ENCODE measurements at regions of chr12 and their contacts with region 1.

Region 1: DNA sequence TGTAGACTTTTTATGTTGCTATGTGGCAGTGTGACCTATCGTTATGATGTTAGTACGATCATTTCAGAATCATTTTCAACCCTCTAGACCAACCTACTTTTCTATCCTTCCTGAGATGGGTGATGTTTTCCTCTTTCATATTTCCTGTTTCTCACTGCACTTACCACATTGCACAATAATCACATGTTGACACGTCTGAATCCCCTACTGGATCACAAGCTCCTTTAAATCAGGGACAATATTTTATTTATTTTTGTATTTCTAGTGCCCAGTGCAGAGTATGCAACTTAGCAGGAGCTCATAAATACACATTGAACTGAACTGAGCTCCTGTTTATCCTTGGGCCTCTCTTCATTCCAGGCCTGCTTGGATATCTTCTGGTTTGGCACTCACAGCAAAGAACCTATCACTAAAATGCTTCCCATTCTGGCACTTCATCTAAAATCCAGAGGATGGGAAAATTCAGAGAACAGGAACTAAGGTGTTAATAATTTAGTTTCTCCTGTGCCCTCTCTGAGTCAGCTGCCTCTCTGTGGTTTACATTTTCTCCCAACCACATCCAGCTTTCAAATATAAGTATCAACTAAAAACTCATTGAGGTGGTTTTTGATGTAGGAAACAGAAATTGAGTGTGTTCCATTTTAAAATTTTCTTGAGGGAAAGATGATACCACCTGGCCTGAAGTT is 69.4 kb upstream of the DYRK2 start:
- DNase-seq: peak in 6 of 10 donors; percentile 27 to 78 (median 64)
- ATAC-seq: peak; percentile 92 to 93
- H3K4me3 Mint-ChIP-seq: peak overlapping the region; percentile 54 to 85 (median 75)
- H3K27ac Mint-ChIP-seq: peak overlapping the region in 8 of 10 donors; percentile 13 to 76 (median 54)
- H3K4me1 Mint-ChIP-seq: peaks cover 33 to 63% (median 52%) of the 10 kb centered on the region in 4 donors
- H3K27me3 Mint-ChIP-seq: no peaks in the 10 kb centered on the region

Region 2: DNA sequence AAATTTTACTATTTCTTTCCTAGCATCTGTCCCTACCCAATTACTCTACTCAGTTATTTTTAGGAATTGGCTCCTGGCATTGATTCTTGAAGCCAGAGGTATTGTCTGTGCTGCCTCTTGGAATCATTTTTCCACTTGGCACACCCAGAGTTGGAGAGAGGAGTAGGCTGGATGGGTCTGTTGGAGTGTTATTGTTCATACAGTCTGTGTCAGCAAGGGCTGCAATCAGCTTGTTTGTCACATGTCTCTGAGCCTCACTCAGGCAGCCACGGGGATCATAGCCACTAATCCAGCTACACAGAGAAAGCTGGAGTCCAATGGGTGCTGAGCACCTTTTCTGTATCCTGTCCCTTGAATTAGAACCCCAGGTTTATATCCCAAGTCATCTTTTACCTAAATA is 106.6 kb before region 1 on chr12:
- POLR2A ChIA-PET with region 1: no interaction called
- DNase-seq: no peak
- ATAC-seq: no peak
- H3K4me3 Mint-ChIP-seq: no peak overlapping the region
- H3K27ac Mint-ChIP-seq: no peak overlapping the region
- H3K4me1 Mint-ChIP-seq: peaks cover 13 to 27% (median 18%) of the 10 kb centered on the region in 4 donors
- H3K27me3 Mint-ChIP-seq: peaks cover 0 to 2% (median 0%) of the 10 kb centered on the region in 5 donors

Region 3: GRCh38 chr12:67558775-67559174 is 20.3 kb before region 1 on chr12:
- POLR2A ChIA-PET with region 1: interaction called, 12 read pairs
- DNase-seq: no peak
- ATAC-seq: no peak
- H3K4me3 Mint-ChIP-seq: no peak overlapping the region
- H3K27ac Mint-ChIP-seq: no peak overlapping the region
- H3K4me1 Mint-ChIP-seq: peaks cover 0 to 18% (median 8%) of the 10 kb centered on the region in 4 donors
- H3K27me3 Mint-ChIP-seq: no peaks in the 10 kb centered on the region

Region 4: GRCh38 chr12:67592216-67593011 is 13.3 kb after region 1 on chr12:
- POLR2A ChIA-PET with region 1: interaction called, 23 read pairs
- DNase-seq: peak in 2 of 10 donors; percentile 36 to 39
- ATAC-seq: peak in 1 of 2 donors; percentile 26
- H3K4me3 Mint-ChIP-seq: peak overlapping the region in 9 of 10 donors; percentile 3 to 69 (median 44)
- H3K27ac Mint-ChIP-seq: peak overlapping the region; percentile 45 to 92 (median 83)
- H3K4me1 Mint-ChIP-seq: peaks cover 29 to 62% (median 56%) of the 10 kb centered on the region in 4 donors
- H3K27me3 Mint-ChIP-seq: no peaks in the 10 kb centered on the region